Activated T-helper 1 cell treated with anti-CD3 and anti-CD28 coated beads, Interleukin-12 subunit alpha, Interleukin-12 subunit beta, Interleukin-2, Interleukin-4 antibody, amounts not matched to agents 30 ng/mL and 10 ng/mL and 1 ng/mL, durations not matched to agents 14 hours and 24 hours and 36 hours (primary cell): ENCODE measurements at regions of chr2 and their contacts with region 1.

Region 1: GRCh38 chr2:74198461-74199274 is at the start of gene MTHFD2:
- DNase-seq: peak; percentile 91
- H3K4me3 Mint-ChIP-seq: peak within 1 kb of the TSS; percentile 98
- H3K27ac Mint-ChIP-seq: peak within 1 kb of the TSS; percentile 100
- H3K4me1 Mint-ChIP-seq: peaks cover 59% of the 10 kb centered on the region
- H3K27me3 Mint-ChIP-seq: no peaks in the 10 kb centered on the region
- total RNA-seq, gene MTHFD2: 437 and 457 TPM in 2 replicates

Region 2: GRCh38 chr2:73812635-73813034 is 386.0 kb before region 1 on chr2:
- intact Hi-C with region 1: no loop called
- DNase-seq: no peak
- H3K4me3 Mint-ChIP-seq: no peak overlapping the region
- H3K27ac Mint-ChIP-seq: no peak overlapping the region
- H3K4me1 Mint-ChIP-seq: no peaks in the 10 kb centered on the region
- H3K27me3 Mint-ChIP-seq: peaks cover 2% of the 10 kb centered on the region

Region 3: DNA sequence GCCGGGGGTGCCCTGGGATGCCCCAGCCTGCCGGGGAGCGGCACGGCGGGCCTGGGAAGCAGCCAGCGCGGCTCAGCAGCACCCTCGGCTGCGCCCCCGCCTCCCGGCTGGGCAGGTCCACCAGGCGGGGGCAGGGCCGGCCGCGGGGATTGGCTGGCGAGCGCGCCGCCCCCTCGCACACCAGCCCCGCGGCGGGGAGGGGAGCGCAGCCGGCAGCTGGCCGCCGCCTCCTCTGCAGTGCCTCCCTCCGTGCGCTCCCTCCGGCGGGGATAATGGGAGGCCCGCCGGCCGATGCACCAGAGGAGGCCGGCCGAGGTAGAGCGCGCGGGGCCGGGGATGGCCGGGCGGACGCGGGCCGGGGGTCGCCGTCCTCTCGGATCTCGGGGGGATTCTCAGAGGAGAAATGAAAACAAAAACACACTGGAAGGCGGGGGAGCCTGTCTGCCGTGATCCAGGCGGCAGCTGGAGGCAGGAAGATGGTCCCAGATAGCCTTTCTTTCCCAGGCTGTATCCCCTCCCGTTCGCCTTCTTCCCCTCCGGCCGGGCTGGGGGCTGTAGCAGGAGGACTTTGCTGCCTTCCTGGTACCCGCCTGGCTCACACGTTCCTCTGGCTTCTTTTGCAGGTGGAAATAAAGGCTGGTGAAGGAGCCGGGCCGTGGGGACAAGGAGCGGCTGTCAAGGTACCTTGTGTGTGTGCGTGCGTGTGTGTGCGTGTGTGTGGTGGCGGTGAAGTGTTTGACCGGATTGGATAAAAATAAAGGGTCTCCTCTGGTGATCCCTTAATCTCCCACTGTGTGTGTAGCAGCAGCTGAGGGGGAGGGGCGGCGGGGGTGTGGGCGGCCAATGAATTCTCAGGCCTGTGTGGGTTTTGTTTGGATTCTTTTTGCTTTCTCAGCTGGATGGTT is 195.9 kb before region 1 on chr2:
- intact Hi-C with region 1: loop called (anchors 2 kb)
- DNase-seq: peak; percentile 81
- H3K4me3 Mint-ChIP-seq: peak overlapping the region; percentile 89
- H3K27ac Mint-ChIP-seq: peak overlapping the region; percentile 66
- H3K4me1 Mint-ChIP-seq: peaks cover 69% of the 10 kb centered on the region
- H3K27me3 Mint-ChIP-seq: peaks cover 2% of the 10 kb centered on the region

Region 4: DNA sequence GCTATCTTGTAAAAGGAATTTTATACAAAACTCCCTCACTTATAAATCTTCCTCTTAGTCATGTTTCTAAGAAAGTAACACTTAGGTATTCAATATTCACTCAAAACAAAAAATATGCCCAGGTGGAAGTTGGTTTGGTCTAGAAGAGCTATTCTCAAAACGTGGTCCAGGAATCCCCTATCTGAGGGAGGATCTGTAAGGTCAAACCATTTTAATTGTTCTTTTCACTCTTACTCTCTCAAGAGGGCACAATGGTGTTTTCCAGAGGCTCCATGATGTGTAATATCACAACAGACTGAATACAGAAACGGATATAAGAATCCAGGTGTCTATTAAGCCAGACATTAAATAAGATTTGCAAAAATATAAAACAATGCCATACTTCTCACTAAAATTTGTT is 29.9 kb before region 1 on chr2:
- intact Hi-C with region 1: loop called (anchors 5 kb)
- DNase-seq: no peak
- H3K4me3 Mint-ChIP-seq: peak overlapping the region; percentile 6
- H3K27ac Mint-ChIP-seq: peak overlapping the region; percentile 67
- H3K4me1 Mint-ChIP-seq: peaks cover 20% of the 10 kb centered on the region
- H3K27me3 Mint-ChIP-seq: no peaks in the 10 kb centered on the region

Region 5: DNA sequence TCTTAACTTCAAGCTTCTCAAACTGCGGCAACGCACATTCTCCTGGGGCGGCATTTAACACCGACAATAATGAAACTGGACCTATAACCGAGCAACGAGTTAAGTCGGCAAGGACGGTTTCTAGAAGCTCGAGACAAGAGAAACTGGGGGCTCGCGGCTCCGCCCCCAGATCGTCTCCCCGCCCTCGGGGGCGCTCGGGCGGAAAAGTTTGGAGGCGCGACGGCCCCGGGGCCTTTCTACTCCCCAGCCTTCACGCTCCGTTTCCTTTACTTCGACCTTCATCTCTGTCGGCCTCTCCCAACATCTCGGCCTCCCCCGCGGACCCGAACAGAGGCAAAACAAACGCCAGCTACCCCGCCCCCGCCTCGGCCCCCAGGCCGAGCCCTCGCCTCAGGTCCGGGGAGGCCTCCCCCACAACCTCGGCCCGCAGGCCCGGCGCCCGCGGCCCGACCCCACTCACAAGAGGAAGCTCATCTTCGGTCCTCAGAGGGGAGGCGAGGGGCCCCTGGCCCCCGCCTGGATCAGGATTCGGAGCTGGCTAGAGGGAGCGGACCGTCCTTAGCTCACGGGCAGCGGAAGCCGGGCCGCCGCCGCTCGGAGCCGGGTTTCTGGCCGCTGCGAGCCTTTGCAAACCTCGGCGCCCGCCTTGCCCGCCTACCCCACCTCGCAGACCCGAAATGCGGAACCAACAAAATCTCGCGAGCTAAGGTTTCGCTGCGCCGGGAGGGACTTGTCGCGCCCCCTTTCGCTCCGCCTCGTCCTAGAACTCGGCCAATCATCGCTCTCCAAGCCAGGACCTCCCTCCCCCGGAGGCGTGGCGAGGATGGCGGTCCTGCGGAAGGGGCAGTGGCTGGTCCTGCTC is 20.2 kb before region 1 on chr2 and contains the start of gene MOB1A:
- intact Hi-C with region 1: loop called (anchors 1 kb)
- DNase-seq: peak; percentile 99
- H3K4me3 Mint-ChIP-seq: peak within 1 kb of the TSS; percentile 88
- H3K27ac Mint-ChIP-seq: peak within 1 kb of the TSS; percentile 85
- H3K4me1 Mint-ChIP-seq: peaks cover 40% of the 10 kb centered on the region
- H3K27me3 Mint-ChIP-seq: no peaks in the 10 kb centered on the region
- total RNA-seq, gene MOB1A: 207 and 221 TPM in 2 replicates

Region 6: DNA sequence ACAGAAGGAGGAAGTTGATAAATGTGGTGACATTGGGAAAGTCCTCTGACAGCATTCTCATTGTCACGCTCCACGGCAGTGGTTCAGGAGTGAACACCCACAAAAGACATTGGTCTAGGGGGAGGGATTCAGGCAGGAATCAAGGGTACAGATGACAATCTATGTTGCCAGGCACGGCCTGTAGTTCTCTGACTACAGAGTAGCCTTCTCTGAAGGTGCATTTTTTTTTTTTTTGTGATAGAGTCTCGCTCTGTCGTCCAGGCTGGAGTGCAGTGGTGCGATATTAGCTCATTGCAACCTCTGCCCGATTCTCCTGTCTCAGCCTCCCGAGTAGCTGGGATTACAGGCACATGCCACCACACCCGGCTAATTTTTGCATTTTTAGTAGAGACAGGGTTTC is 12.6 kb before region 1 on chr2:
- intact Hi-C with region 1: loop called (anchors 1 kb)
- DNase-seq: peak; percentile 77
- H3K4me3 Mint-ChIP-seq: peak overlapping the region; percentile 58
- H3K27ac Mint-ChIP-seq: peak overlapping the region; percentile 97
- H3K4me1 Mint-ChIP-seq: peaks cover 63% of the 10 kb centered on the region
- H3K27me3 Mint-ChIP-seq: no peaks in the 10 kb centered on the region